ENCODE measurements at regions of chr3 and their contacts with region 1.

Region 1: GRCh38 chr3:192467230-192468140 is 259.9 kb downstream of the FGF12 start:
- DNase-seq: peak; percentile 33 to 59 (median 38)
- ATAC-seq: peak; percentile 75 to 80
- H3K4me3 ChIP-seq: no peak overlapping the region
- H3K27ac ChIP-seq: no peak overlapping the region
- H3K4me1 ChIP-seq: no peaks in the 10 kb centered on the region
- H3K27me3 ChIP-seq: no peaks in the 10 kb centered on the region

Region 2: GRCh38 chr3:192553707-192554106 is 86.2 kb after region 1 on chr3:
- intact Hi-C with region 1: loop called in 1 of 4 experiments (anchors 10 kb)
- DNase-seq: no peak
- ATAC-seq: no peak
- H3K4me3 ChIP-seq: no peak overlapping the region
- H3K27ac ChIP-seq: no peak overlapping the region
- H3K4me1 ChIP-seq: no peaks in the 10 kb centered on the region
- H3K27me3 ChIP-seq: no peaks in the 10 kb centered on the region

Region 3: GRCh38 chr3:192607798-192608197 is 140.3 kb after region 1 on chr3:
- intact Hi-C with region 1: no loop called
- DNase-seq: no peak
- ATAC-seq: no peak
- H3K4me3 ChIP-seq: no peak overlapping the region
- H3K27ac ChIP-seq: no peak overlapping the region
- H3K4me1 ChIP-seq: peaks cover 3% of the 10 kb centered on the region
- H3K27me3 ChIP-seq: no peaks in the 10 kb centered on the region

Region 4: GRCh38 chr3:192802957-192803899 is 335.7 kb after region 1 on chr3:
- intact Hi-C with region 1: loop called (anchors 5 to 10 kb)
- DNase-seq: no peak
- ATAC-seq: peak; percentile 52 to 59
- H3K4me3 ChIP-seq: no peak overlapping the region
- H3K27ac ChIP-seq: no peak overlapping the region
- H3K4me1 ChIP-seq: peaks cover 4% of the 10 kb centered on the region
- H3K27me3 ChIP-seq: no peaks in the 10 kb centered on the region

Region 5: GRCh38 chr3:193499119-193499770 is 1031.8 kb after region 1 on chr3:
- intact Hi-C with region 1: no loop called
- DNase-seq: peak in 1 of 3 donors; percentile 13
- ATAC-seq: peak; percentile 20 to 63
- H3K4me3 ChIP-seq: no peak overlapping the region
- H3K27ac ChIP-seq: no peak overlapping the region
- H3K4me1 ChIP-seq: no peaks in the 10 kb centered on the region
- H3K27me3 ChIP-seq: no peaks in the 10 kb centered on the region